B cell (primary cell): ENCODE measurements at regions of chr6 and their contacts with region 1.

Region 1: DNA sequence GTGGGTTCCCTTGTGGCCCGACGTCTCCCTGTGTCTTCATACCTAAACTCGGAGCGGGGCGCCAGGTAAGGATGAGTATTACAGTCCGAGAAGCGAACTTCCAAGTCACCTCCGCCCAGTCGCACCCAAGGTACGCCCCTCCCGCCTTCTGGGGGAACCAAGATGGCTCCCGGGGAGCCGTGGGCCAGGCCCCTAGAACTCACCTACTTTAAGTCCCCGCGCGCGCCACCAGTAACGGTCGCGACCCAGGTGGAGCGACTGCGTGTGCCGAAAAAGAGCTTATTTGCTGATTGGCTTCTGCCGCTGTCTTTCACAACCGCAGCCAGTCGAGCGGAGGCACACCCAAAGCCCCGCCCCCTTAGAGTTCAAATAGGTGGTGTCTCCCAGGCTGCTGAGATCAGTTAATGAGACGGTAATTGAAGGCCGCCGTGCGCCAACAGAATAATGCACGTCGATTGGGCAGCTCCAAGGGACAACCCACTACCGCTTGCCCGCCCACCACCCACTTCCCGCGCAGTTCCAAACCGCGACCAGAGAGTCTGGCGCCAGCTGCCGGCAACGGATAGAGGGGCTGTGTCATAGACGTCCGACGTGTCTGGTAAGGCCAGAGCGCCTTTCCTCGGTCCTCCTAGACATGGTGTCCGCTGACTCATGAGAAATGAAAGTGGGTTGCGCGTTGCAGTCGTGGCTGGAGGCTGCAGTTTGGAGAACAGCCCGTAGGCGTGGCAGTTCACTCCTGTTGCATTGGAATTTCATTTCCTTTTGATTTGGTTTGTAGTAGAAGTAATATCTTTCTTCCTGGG is at the start of gene MDC1:
- DNase-seq: peak; percentile 100
- ATAC-seq: peak; percentile 70
- H3K4me3 ChIP-seq: peak within 1 kb of the TSS; percentile 71 to 82 (median 80)
- H3K4me3 Mint-ChIP-seq: peak within 1 kb of the TSS; percentile 96
- H3K27ac ChIP-seq: peak within 1 kb of the TSS; percentile 91 to 94
- H3K27ac Mint-ChIP-seq: peak within 1 kb of the TSS; percentile 99
- H3K4me1 ChIP-seq: peaks cover 23 to 33% of the 10 kb centered on the region in 2 donors
- H3K4me1 Mint-ChIP-seq: peaks cover 40% of the 10 kb centered on the region
- H3K27me3 ChIP-seq: no peaks in the 10 kb centered on the region
- H3K27me3 Mint-ChIP-seq: no peaks in the 10 kb centered on the region
- CTCF ChIP-seq: peak; percentile 50
- total RNA-seq, gene MDC1: 69.3 and 87.4 TPM in 2 replicates

Region 2: GRCh38 chr6:30556066-30556905 is 161.0 kb before region 1 on chr6 and contains the start of gene GNL1:
- CTCF ChIA-PET with region 1: interaction called, 4 read pairs
- POLR2A ChIA-PET with region 1: interaction called, 4 read pairs
- intact Hi-C with region 1: loop called (anchors 1 kb)
- DNase-seq: peak; percentile 100
- ATAC-seq: peak; percentile 89
- H3K4me3 ChIP-seq: peak within 1 kb of the TSS; percentile 81 to 100 (median 94)
- H3K4me3 Mint-ChIP-seq: peak within 1 kb of the TSS; percentile 99
- H3K27ac ChIP-seq: peak within 1 kb of the TSS; percentile 91 to 95
- H3K27ac Mint-ChIP-seq: peak within 1 kb of the TSS; percentile 99
- H3K4me1 ChIP-seq: peaks cover 19 to 27% of the 10 kb centered on the region in 2 donors
- H3K4me1 Mint-ChIP-seq: peaks cover 32% of the 10 kb centered on the region
- H3K27me3 ChIP-seq: no peaks in the 10 kb centered on the region
- H3K27me3 Mint-ChIP-seq: no peaks in the 10 kb centered on the region
- CTCF ChIP-seq: no peak
- total RNA-seq, gene GNL1: 107 and 109 TPM in 2 replicates

Region 3: GRCh38 chr6:30626484-30627366 is 90.5 kb before region 1 on chr6 and contains the start of gene ATAT1:
- CTCF ChIA-PET with region 1: interaction called, 12 read pairs
- POLR2A ChIA-PET with region 1: no interaction called
- intact Hi-C with region 1: no loop called
- DNase-seq: peak; percentile 93
- ATAC-seq: peak; percentile 99
- H3K4me3 ChIP-seq: peak within 1 kb of the TSS; percentile 60 to 87 (median 72)
- H3K4me3 Mint-ChIP-seq: peak within 1 kb of the TSS; percentile 93
- H3K27ac ChIP-seq: peak within 1 kb of the TSS; percentile 84 to 87
- H3K27ac Mint-ChIP-seq: peak within 1 kb of the TSS; percentile 89
- H3K4me1 ChIP-seq: peaks cover 12 to 18% of the 10 kb centered on the region in 2 donors
- H3K4me1 Mint-ChIP-seq: peaks cover 19% of the 10 kb centered on the region
- H3K27me3 ChIP-seq: no peaks in the 10 kb centered on the region
- H3K27me3 Mint-ChIP-seq: no peaks in the 10 kb centered on the region
- CTCF ChIP-seq: peak; percentile 64
- total RNA-seq, gene ATAT1: 19.3 and 21.5 TPM in 2 replicates

Region 4: GRCh38 chr6:30672445-30673253 is 44.6 kb before region 1 on chr6 and contains the start of gene DHX16:
- CTCF ChIA-PET with region 1: interaction called, 963 read pairs
- POLR2A ChIA-PET with region 1: interaction called, 216 read pairs
- intact Hi-C with region 1: loop called (anchors 1 kb)
- DNase-seq: peak; percentile 97
- ATAC-seq: peak; percentile 88
- H3K4me3 ChIP-seq: peak within 1 kb of the TSS; percentile 85 to 100 (median 98)
- H3K4me3 Mint-ChIP-seq: peak within 1 kb of the TSS; percentile 84
- H3K27ac ChIP-seq: peak within 1 kb of the TSS; percentile 54 to 75
- H3K27ac Mint-ChIP-seq: peak within 1 kb of the TSS; percentile 87
- H3K4me1 ChIP-seq: peaks cover 10 to 19% of the 10 kb centered on the region in 2 donors
- H3K4me1 Mint-ChIP-seq: peaks cover 29% of the 10 kb centered on the region
- H3K27me3 ChIP-seq: no peaks in the 10 kb centered on the region
- H3K27me3 Mint-ChIP-seq: no peaks in the 10 kb centered on the region
- CTCF ChIP-seq: peak; percentile 79
- total RNA-seq, gene DHX16: 51.1 and 58.3 TPM in 2 replicates

Region 5: DNA sequence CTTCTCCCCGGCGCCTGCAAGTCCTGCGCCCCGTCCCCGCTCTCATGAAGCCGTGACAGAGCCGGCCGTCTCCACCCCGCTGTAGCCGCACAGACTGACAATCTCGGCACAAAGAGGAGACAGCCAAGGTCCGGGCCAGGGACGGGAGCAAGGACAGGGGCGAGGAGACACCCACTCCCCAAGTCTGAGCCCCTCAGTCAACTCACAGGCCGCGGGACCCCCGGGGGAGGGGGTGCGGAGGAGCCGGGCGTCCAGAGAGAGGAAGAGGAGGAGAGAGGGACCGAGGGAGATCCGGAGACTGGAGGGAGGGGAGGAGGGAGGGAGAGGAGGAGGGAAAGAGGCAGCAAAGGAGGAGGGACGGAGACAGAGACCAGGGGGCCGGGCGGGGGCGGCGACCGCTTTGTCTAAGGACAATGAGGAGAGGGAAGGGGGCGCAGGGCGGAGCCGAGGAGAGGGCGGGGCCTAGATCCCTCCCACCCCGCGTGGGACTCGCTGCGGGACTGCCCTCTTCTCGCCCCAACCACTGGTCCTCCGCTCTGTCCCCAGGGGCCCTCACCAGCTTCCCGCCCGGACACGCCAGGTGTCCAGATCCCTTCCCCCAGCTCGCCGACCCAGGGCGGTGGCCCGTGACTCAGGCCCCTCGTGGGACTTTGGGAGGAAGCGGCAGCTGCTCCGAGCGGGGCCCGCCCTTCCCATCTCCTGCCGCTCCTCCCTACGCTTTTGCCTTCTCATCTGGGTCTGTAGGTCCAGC is 30.2 kb before region 1 on chr6:
- CTCF ChIA-PET with region 1: interaction called, 963 read pairs
- POLR2A ChIA-PET with region 1: interaction called, 216 read pairs
- intact Hi-C with region 1: loop called (anchors 1 kb)
- DNase-seq: peak; percentile 90
- ATAC-seq: peak; percentile 55
- H3K4me3 ChIP-seq: peak overlapping the region; percentile 40 to 100 (median 93)
- H3K4me3 Mint-ChIP-seq: peak overlapping the region; percentile 97
- H3K27ac ChIP-seq: peak overlapping the region; percentile 93 to 97
- H3K27ac Mint-ChIP-seq: peak overlapping the region; percentile 99
- H3K4me1 ChIP-seq: peaks cover 39 to 46% of the 10 kb centered on the region in 2 donors
- H3K4me1 Mint-ChIP-seq: peaks cover 71% of the 10 kb centered on the region
- H3K27me3 ChIP-seq: no peaks in the 10 kb centered on the region
- H3K27me3 Mint-ChIP-seq: no peaks in the 10 kb centered on the region
- CTCF ChIP-seq: no peak

Region 6: DNA sequence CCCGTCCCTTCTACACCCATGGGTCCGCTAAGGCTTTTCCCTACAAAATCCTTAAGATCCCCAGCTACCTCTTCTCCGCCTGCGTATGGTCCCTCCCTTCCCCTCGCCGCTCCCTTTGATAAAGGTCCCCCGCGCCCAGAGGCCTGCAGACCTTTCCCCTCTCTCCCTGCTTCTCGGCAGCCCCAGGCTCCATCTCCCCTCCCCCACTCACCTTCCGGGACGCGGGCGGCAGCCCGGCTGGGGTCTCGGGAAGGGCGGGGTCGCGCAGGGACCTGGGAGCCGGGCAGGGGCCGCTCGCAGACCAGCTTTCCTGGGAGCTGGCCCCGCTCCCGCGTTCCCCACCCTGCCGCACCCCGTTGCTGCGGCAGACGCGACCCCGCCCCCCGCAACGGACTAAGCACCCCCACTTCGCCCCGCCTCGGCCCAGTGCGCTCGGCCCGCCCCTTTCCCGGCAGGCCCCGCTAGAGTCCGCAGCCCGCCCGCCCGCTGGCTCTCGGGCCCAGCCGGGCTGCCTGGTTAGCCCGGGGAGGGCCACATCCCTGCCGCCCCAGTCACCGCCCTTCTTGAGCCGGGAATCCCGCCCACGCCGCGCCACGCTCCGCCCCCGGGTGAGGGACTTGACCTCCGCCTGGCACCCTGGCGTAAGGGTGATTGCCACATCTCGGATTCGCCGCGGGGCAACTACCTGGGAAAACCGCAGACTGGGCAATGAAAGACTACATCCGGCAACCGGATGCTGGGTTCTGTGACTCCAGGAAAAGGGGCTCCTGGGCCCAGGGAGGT is 25.3 kb after region 1 on chr6 and contains the start of gene FLOT1:
- CTCF ChIA-PET with region 1: interaction called, 7 read pairs
- POLR2A ChIA-PET with region 1: interaction called, 3 read pairs
- intact Hi-C with region 1: loop called (anchors 1 kb)
- DNase-seq: peak; percentile 85
- ATAC-seq: peak; percentile 90
- H3K4me3 ChIP-seq: peak within 1 kb of the TSS; percentile 56 to 82 (median 63)
- H3K4me3 Mint-ChIP-seq: peak within 1 kb of the TSS; percentile 87
- H3K27ac ChIP-seq: peak within 1 kb of the TSS in 1 of 2 donors; percentile 61
- H3K27ac Mint-ChIP-seq: peak within 1 kb of the TSS; percentile 77
- H3K4me1 ChIP-seq: peaks cover 18 to 35% of the 10 kb centered on the region in 2 donors
- H3K4me1 Mint-ChIP-seq: peaks cover 46% of the 10 kb centered on the region
- H3K27me3 ChIP-seq: no peaks in the 10 kb centered on the region
- H3K27me3 Mint-ChIP-seq: no peaks in the 10 kb centered on the region
- CTCF ChIP-seq: no peak
- total RNA-seq, gene FLOT1: 71.2 and 75.7 TPM in 2 replicates

Region 7: GRCh38 chr6:30814136-30815040 is 97.1 kb after region 1 on chr6:
- CTCF ChIA-PET with region 1: no interaction called
- POLR2A ChIA-PET with region 1: no interaction called
- intact Hi-C with region 1: no loop called
- DNase-seq: no peak
- ATAC-seq: no peak
- H3K4me3 ChIP-seq: no peak overlapping the region
- H3K4me3 Mint-ChIP-seq: no peak overlapping the region
- H3K27ac ChIP-seq: no peak overlapping the region
- H3K27ac Mint-ChIP-seq: no peak overlapping the region
- H3K4me1 ChIP-seq: peaks cover 7 to 10% of the 10 kb centered on the region in 2 donors
- H3K4me1 Mint-ChIP-seq: peaks cover 28% of the 10 kb centered on the region
- H3K27me3 ChIP-seq: peaks cover 0 to 2% (median under 1%) of the 10 kb centered on the region in 4 experiments
- H3K27me3 Mint-ChIP-seq: no peaks in the 10 kb centered on the region
- CTCF ChIP-seq: no peak